Left ventricle myocardium inferior (tissue), 1 donor: ENCODE measurements at regions of chr2 and their contacts with region 1.

Region 1: GRCh38 chr2:219836647-219837177 is 209.3 kb downstream of the SLC4A3 start:
- DNase-seq: no peak
- H3K4me3 ChIP-seq: no peak overlapping the region
- H3K27ac ChIP-seq: no peak overlapping the region
- H3K4me1 ChIP-seq: no peaks in the 10 kb centered on the region
- H3K27me3 ChIP-seq: no peaks in the 10 kb centered on the region
- CTCF ChIP-seq: peak; percentile 62

Region 2: GRCh38 chr2:219331560-219332213 is 505.0 kb before region 1 on chr2:
- intact Hi-C with region 1: no loop called
- DNase-seq: peak; percentile 21
- H3K4me3 ChIP-seq: no peak overlapping the region
- H3K27ac ChIP-seq: no peak overlapping the region
- H3K4me1 ChIP-seq: no peaks in the 10 kb centered on the region
- H3K27me3 ChIP-seq: peaks cover 100% of the 10 kb centered on the region
- CTCF ChIP-seq: no peak

Region 3: GRCh38 chr2:219521066-219521880 is 315.4 kb before region 1 on chr2:
- intact Hi-C with region 1: no loop called
- DNase-seq: no peak
- H3K4me3 ChIP-seq: peak overlapping the region; percentile 32
- H3K27ac ChIP-seq: peak overlapping the region; percentile 47
- H3K4me1 ChIP-seq: peaks cover 35% of the 10 kb centered on the region
- H3K27me3 ChIP-seq: peaks cover 98% of the 10 kb centered on the region
- CTCF ChIP-seq: peak; percentile 68

Region 4: GRCh38 chr2:219736209-219736608 is 100.5 kb before region 1 on chr2:
- intact Hi-C with region 1: loop called (anchors 5 kb)
- DNase-seq: no peak
- H3K4me3 ChIP-seq: no peak overlapping the region
- H3K27ac ChIP-seq: no peak overlapping the region
- H3K4me1 ChIP-seq: peaks cover 18% of the 10 kb centered on the region
- H3K27me3 ChIP-seq: no peaks in the 10 kb centered on the region
- CTCF ChIP-seq: peak; percentile 65